ENCODE measurements at regions of chr11 and their contacts with region 1.

Region 1: GRCh38 chr11:45917623-45918330 is at the start of gene PEX16:
- DNase-seq: peak; percentile 97
- H3K4me3 ChIP-seq: peak within 1 kb of the TSS; percentile 46 to 93 (median 84)
- H3K27ac ChIP-seq: peak within 1 kb of the TSS; percentile 88 to 97 (median 92)
- H3K4me1 ChIP-seq: peaks cover 21 to 34% (median 23%) of the 10 kb centered on the region in 4 donors
- H3K27me3 ChIP-seq: peaks cover 18% of the 10 kb centered on the region
- CTCF ChIP-seq: no peak
- EP300 ChIP-seq: no peak
- POLR2A ChIP-seq: peak; percentile 86
- total RNA-seq, gene PEX16: 31.3 to 111 (median 51.9) TPM

Region 2: DNA sequence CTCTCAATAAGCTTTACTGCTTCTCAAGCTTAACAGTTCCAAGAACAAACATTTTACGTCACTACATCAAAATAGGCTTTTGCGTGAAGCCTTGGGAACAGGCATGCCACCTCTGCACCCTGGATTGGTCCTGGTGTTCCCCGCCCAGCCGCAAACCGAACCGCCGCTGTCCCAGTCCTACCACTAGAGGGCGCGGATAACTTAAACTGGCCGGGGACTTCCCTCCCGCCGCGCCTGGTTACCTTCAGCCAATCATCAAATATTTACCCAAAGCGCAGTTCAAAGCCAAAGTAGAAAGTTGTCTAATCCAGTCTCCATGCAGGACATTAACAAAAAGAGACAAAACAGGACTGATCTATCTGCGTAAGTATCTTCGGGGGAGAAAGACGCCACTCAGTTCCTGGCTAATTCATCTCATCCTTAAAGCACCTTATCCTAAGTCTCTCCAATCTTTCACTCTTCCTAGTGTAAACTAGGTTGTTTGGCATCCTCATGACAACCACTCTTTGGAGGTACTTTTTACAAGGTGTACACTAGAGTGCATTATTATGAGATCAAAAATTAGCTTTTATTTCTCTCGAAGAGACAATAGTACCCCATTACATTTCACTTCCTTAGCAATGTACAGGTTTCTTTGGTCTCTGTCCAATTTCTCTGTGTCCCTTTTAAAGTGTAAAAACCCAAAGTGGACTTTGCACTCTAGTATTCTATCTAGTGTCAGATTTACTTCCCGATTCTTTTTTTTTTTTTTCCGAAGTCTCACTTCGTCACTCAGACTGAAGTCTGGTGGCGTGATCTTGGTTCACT is 74.5 kb before region 1 on chr11:
- in situ Hi-C with region 1: no loop called
- intact Hi-C with region 1: loop called (anchors 2 kb)
- DNase-seq: peak; percentile 96
- H3K4me3 ChIP-seq: peak overlapping the region in 1 of 4 donors; percentile 22
- H3K27ac ChIP-seq: peak overlapping the region; percentile 88 to 92 (median 90)
- H3K4me1 ChIP-seq: peaks cover 8 to 30% (median 12%) of the 10 kb centered on the region in 4 donors
- H3K27me3 ChIP-seq: no peaks in the 10 kb centered on the region
- CTCF ChIP-seq: peak; percentile 89 to 98 (median 97)
- EP300 ChIP-seq: peak; percentile 41
- POLR2A ChIP-seq: peak; percentile 49

Region 3: GRCh38 chr11:45859661-45860140 is 58.1 kb before region 1 on chr11:
- in situ Hi-C with region 1: loop called in 1 of 4 experiments (anchors 10 kb)
- intact Hi-C with region 1: no loop called
- DNase-seq: peak; percentile 94
- H3K4me3 ChIP-seq: no peak overlapping the region
- H3K27ac ChIP-seq: peak overlapping the region; percentile 76 to 89 (median 83)
- H3K4me1 ChIP-seq: peaks cover 29 to 59% (median 41%) of the 10 kb centered on the region in 4 donors
- H3K27me3 ChIP-seq: no peaks in the 10 kb centered on the region
- CTCF ChIP-seq: no peak
- EP300 ChIP-seq: peak; percentile 81
- POLR2A ChIP-seq: peak; percentile 32

Measured in transverse colon (tissue), 4 donors.